Activated CD4-positive, alpha-beta memory T cell treated with anti-CD3 and anti-CD28 coated beads, Interleukin-2, amount 10 ng/mL, durations not matched to agents 7 days and 5 days (primary cell): ENCODE measurements at regions of chr16 and their contacts with region 1.

Region 1: GRCh38 chr16:588744-589657 is 865 bp upstream of the RAB40C start:
- DNase-seq: peak; percentile 98
- H3K4me3 Mint-ChIP-seq: peak overlapping the region; percentile 82
- H3K27ac Mint-ChIP-seq: peak overlapping the region; percentile 99
- H3K4me1 Mint-ChIP-seq: peaks cover 28% of the 10 kb centered on the region
- H3K27me3 Mint-ChIP-seq: no peaks in the 10 kb centered on the region

Region 2: GRCh38 chr16:569445-570254 is 19.4 kb before region 1 on chr16 and contains the start of gene PIGQ:
- CTCF ChIA-PET with region 1: no interaction called
- POLR2A ChIA-PET with region 1: interaction called, 10 read pairs
- DNase-seq: peak; percentile 75
- H3K4me3 Mint-ChIP-seq: peak within 1 kb of the TSS; percentile 81
- H3K27ac Mint-ChIP-seq: peak within 1 kb of the TSS; percentile 82
- H3K4me1 Mint-ChIP-seq: peaks cover 33% of the 10 kb centered on the region
- H3K27me3 Mint-ChIP-seq: no peaks in the 10 kb centered on the region
- total RNA-seq, gene PIGQ: 33.7 to 35.1 TPM

Region 3: DNA sequence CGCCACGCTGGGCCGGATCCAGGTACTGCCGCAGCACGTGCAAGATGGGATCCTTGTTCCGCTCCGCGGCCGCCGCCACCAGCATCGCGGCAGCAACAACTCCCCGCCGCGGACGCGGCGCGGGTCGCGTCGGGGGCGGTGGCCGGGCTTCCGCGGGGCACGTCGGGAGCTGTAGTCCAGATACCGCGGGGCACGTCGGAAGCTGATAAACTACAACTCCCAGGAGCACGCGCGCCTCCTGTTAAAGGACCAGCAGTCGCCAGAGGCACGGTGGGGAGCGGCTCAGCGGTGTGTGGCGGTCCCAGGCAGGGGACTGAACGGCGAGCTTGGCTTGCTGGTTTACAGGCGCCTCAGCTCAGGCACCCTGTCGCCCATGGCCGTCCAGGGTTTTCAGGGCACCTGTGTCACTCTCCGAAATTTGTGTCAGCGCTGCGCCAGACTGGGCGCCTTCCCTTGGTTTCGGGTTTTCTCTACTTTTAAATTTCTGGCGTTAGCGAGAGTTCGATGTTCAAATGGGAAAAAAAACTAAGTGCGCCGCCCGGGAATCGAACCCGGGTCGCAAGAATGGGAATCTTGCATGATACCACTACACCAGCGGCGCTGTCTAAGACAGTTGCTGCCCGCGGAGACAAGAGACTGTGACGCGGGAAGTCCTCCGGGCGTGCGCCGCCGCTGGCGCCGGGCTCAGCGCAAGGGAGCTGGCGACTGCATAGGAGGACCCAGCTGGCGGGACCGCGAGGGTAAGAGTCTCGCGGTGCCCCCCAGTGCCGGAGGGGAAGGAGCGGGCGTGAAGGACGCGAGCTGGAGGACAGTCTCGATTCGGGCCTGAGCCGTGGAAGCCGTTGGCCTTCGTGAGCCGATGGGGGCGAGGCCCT is 47.4 kb after region 1 on chr16 and contains the start of gene METTL26:
- CTCF ChIA-PET with region 1: no interaction called
- POLR2A ChIA-PET with region 1: interaction called, 15 read pairs
- DNase-seq: peak; percentile 94
- H3K4me3 Mint-ChIP-seq: peak within 1 kb of the TSS; percentile 89
- H3K27ac Mint-ChIP-seq: peak within 1 kb of the TSS; percentile 98
- H3K4me1 Mint-ChIP-seq: peaks cover 12% of the 10 kb centered on the region
- H3K27me3 Mint-ChIP-seq: no peaks in the 10 kb centered on the region
- total RNA-seq, gene METTL26: 66.6 to 67.5 TPM